Gastrocnemius medialis (tissue), 4 donors: ENCODE measurements at regions of chr16 and their contacts with region 1.

Region 1: GRCh38 chr16:68229431-68230198 is 6.3 kb downstream of the ESRP2 start:
- DNase-seq: peak in 1 of 2 donors; percentile 63
- ATAC-seq: peak; percentile 63 to 73
- H3K4me3 ChIP-seq: no peak overlapping the region
- H3K27ac ChIP-seq: peak overlapping the region; percentile 68 to 85 (median 75)
- H3K4me1 ChIP-seq: peaks cover 32 to 34% of the 10 kb centered on the region in 2 donors
- H3K27me3 ChIP-seq: no peaks in the 10 kb centered on the region
- CTCF ChIP-seq: peak; percentile 85 to 94 (median 93)
- POLR2A ChIP-seq: no peak

Region 2: DNA sequence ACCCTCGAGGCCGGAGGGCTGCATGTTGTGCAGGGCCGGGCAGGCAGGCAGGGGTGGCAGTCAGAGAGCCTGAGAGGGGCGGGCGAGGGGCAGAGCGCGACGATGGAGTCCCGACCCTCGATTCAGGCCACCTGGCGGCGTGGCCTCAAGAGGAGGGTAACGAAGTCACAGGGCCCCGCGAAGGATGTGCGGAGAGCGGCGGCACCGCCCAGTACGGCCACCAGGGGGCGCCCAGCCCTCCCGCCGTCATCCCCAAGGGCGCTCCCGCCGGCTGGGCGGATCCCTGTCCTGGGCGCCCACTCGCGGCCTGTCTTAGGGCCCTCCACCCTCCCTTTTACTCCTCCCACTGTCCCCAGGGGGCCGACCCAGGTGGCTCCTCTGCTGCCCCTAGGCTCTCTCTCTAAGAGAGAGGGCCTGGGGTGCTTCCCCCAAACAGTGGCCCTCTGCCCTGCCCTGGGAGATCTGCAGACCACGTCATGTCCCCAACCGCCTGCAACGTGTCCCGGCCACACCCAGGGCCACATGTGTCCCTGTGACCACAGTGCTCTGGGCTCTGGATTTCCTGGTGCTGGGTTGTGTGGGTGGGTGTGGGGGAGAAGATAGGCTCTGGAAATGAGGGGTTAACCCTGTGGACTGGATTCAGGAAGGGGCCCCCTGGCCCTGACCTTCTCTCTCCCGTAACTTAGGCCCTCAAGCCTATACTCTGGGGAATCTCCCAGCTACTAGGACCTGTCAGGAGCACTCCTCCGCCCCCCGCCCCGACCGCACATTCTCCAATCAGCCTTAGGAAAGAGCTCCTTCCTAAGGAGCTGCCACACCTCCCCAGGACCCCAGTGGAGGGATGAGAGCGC is 236.2 kb before region 1 on chr16:
- in situ Hi-C with region 1: no loop called
- intact Hi-C with region 1: loop called (anchors 2 kb)
- DNase-seq: peak; percentile 62 to 77
- ATAC-seq: peak; percentile 73 to 74
- H3K4me3 ChIP-seq: peak overlapping the region; percentile 43 to 59 (median 50)
- H3K27ac ChIP-seq: peak overlapping the region; percentile 78 to 83 (median 80)
- H3K4me1 ChIP-seq: peaks cover 24 to 34% of the 10 kb centered on the region in 2 donors
- H3K27me3 ChIP-seq: no peaks in the 10 kb centered on the region
- CTCF ChIP-seq: peak; percentile 97 to 100 (median 100)
- POLR2A ChIP-seq: peak; percentile 39 to 44

Region 3: GRCh38 chr16:68064791-68065365 is 164.7 kb before region 1 on chr16:
- in situ Hi-C with region 1: no loop called
- intact Hi-C with region 1: loop called (anchors 1 kb)
- DNase-seq: peak; percentile 83 to 91
- ATAC-seq: peak; percentile 90
- H3K4me3 ChIP-seq: no peak overlapping the region
- H3K27ac ChIP-seq: peak overlapping the region; percentile 85 to 92 (median 89)
- H3K4me1 ChIP-seq: peaks cover 40 to 50% of the 10 kb centered on the region in 2 donors
- H3K27me3 ChIP-seq: no peaks in the 10 kb centered on the region
- CTCF ChIP-seq: peak; percentile 84 to 86 (median 85)
- POLR2A ChIP-seq: no peak

Region 4: DNA sequence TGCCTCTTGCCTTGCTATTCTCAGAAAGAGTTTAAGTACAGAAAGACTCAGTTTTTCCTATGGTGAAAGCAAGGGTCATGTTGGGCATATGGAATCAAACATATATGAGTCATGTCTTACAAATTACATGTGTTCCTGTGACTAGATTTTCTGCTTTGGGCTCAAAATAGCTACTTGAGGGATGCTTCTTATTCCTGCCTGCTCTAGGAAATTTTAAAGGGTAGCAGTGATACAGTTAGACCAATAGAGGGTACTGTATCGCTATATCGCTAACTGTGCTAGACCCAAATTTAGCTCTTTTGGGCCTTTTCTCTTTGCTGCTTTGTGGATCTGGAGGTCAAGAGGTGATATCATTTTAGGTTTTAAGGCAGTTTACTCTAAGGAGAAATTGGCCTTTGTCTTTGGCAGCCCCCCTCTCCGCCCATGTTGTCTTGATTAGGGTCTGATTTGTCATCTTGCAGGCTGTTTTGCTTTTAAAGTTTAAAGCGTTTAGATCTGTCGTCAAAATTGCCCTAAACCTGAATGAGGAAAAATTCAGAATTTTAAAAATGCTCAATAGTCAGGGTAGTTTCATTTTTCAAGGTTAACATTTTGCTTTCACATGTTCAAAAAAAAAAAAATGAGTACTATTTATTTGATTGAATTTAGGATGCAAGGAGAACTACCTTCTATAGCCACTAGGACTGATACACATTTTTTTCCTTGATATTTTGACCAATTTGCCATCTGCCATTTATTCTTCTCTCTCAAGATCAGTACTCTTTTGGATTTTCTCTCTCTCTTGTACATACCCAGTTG is 135.6 kb before region 1 on chr16:
- in situ Hi-C with region 1: loop called in 2 of 4 experiments (anchors 5 kb)
- intact Hi-C with region 1: loop called (anchors 1 kb)
- DNase-seq: no peak
- ATAC-seq: peak in 1 of 2 donors; percentile 51
- H3K4me3 ChIP-seq: peak overlapping the region in 1 of 4 donors; percentile 15
- H3K27ac ChIP-seq: peak overlapping the region; percentile 92 to 99 (median 97)
- H3K4me1 ChIP-seq: peaks cover 91 to 93% of the 10 kb centered on the region in 2 donors
- H3K27me3 ChIP-seq: no peaks in the 10 kb centered on the region
- CTCF ChIP-seq: peak in 4 of 5 experiments; percentile 31 to 49 (median 46)
- POLR2A ChIP-seq: no peak